Activated CD4-positive, alpha-beta T cell treated with anti-CD3 and anti-CD28 coated beads for 36 hours (primary cell): ENCODE measurements at regions of chr16 and their contacts with region 1.

Region 1: GRCh38 chr16:53054670-53055485 is at the start of gene CHD9:
- DNase-seq: peak; percentile 82
- ATAC-seq: peak; percentile 89
- H3K4me3 Mint-ChIP-seq: peak within 1 kb of the TSS; percentile 70
- H3K27ac Mint-ChIP-seq: peak within 1 kb of the TSS; percentile 83
- H3K4me1 Mint-ChIP-seq: peaks cover 21% of the 10 kb centered on the region
- H3K27me3 Mint-ChIP-seq: peaks cover 6% of the 10 kb centered on the region
- total RNA-seq, gene CHD9: 13.2 to 18.8 TPM

Region 2: GRCh38 chr16:52817696-52818095 is 237.2 kb before region 1 on chr16:
- CTCF ChIA-PET with region 1: no interaction called
- POLR2A ChIA-PET with region 1: no interaction called
- intact Hi-C with region 1: no loop called
- DNase-seq: no peak
- ATAC-seq: no peak
- H3K4me3 Mint-ChIP-seq: no peak overlapping the region
- H3K27ac Mint-ChIP-seq: no peak overlapping the region
- H3K4me1 Mint-ChIP-seq: no peaks in the 10 kb centered on the region
- H3K27me3 Mint-ChIP-seq: no peaks in the 10 kb centered on the region

Region 3: DNA sequence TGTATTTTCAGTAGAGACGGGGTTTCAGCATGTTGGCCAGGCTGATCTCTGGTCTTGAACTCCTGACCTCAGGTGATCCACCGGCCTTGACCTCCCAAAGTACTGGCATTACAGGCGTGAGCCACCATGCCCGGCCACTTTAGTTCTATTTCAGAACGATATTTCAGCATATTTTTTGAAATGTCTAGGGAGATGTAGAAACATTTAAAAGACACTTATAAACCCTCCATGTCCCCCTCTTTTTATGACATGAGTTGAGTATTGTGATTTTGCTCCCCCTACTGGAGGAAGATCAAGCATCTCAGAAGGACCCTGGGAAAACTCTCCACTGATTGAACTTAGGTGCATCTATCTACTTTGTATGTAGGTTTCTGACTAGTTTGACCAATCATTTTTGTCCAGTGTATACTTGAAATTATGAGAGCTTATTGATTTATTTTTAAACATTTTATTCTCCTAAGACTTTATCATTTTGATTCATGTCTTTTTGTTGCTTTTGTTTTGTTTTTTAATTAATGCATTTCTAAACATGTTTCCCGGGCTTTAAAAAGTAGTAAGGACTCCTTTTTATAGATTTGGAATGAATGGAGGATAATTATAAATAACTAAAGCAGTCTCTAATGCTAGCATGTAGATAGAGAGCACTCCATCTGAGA is 105.0 kb after region 1 on chr16:
- CTCF ChIA-PET with region 1: interaction called, 7 read pairs
- POLR2A ChIA-PET with region 1: no interaction called
- intact Hi-C with region 1: loop called (anchors 1 kb)
- DNase-seq: no peak
- ATAC-seq: peak; percentile 64
- H3K4me3 Mint-ChIP-seq: no peak overlapping the region
- H3K27ac Mint-ChIP-seq: no peak overlapping the region
- H3K4me1 Mint-ChIP-seq: peaks cover under 1% of the 10 kb centered on the region
- H3K27me3 Mint-ChIP-seq: no peaks in the 10 kb centered on the region

Region 4: GRCh38 chr16:53220585-53220984 is 165.7 kb after region 1 on chr16:
- CTCF ChIA-PET with region 1: interaction called, 4 read pairs
- POLR2A ChIA-PET with region 1: no interaction called
- intact Hi-C with region 1: loop called in 1 of 2 experiments (anchors 2 kb)
- DNase-seq: no peak
- ATAC-seq: no peak
- H3K4me3 Mint-ChIP-seq: no peak overlapping the region
- H3K27ac Mint-ChIP-seq: no peak overlapping the region
- H3K4me1 Mint-ChIP-seq: peaks cover 3% of the 10 kb centered on the region
- H3K27me3 Mint-ChIP-seq: no peaks in the 10 kb centered on the region

Region 5: DNA sequence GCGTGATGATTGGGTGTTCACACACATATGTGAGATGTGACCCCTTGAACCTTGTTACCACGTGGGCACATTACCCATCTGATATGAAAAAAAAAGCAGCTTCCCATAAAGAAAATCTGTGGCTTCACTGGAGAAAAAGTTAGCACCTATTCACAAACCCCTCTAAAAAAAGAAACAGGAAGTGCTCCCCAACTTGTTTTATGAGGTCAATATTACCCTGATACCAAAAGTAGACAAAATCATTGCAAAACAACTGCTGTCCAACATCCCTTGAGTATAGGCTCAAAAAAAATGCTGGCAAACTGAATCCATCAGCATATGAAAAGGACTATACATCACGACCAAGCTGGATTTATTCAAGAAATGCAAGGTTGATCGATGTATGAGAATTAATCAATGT is 279.7 kb after region 1 on chr16:
- CTCF ChIA-PET with region 1: no interaction called
- POLR2A ChIA-PET with region 1: no interaction called
- intact Hi-C with region 1: no loop called
- DNase-seq: no peak
- ATAC-seq: no peak
- H3K4me3 Mint-ChIP-seq: no peak overlapping the region
- H3K27ac Mint-ChIP-seq: no peak overlapping the region
- H3K4me1 Mint-ChIP-seq: peaks cover 2% of the 10 kb centered on the region
- H3K27me3 Mint-ChIP-seq: no peaks in the 10 kb centered on the region

Region 6: GRCh38 chr16:53372992-53373871 is 318.4 kb after region 1 on chr16:
- CTCF ChIA-PET with region 1: interaction called, 3 read pairs
- POLR2A ChIA-PET with region 1: no interaction called
- intact Hi-C with region 1: loop called in 1 of 2 experiments (anchors 5 kb)
- DNase-seq: peak; percentile 88
- ATAC-seq: peak; percentile 97
- H3K4me3 Mint-ChIP-seq: no peak overlapping the region
- H3K27ac Mint-ChIP-seq: peak overlapping the region; percentile 61
- H3K4me1 Mint-ChIP-seq: peaks cover 24% of the 10 kb centered on the region
- H3K27me3 Mint-ChIP-seq: no peaks in the 10 kb centered on the region

Region 7: DNA sequence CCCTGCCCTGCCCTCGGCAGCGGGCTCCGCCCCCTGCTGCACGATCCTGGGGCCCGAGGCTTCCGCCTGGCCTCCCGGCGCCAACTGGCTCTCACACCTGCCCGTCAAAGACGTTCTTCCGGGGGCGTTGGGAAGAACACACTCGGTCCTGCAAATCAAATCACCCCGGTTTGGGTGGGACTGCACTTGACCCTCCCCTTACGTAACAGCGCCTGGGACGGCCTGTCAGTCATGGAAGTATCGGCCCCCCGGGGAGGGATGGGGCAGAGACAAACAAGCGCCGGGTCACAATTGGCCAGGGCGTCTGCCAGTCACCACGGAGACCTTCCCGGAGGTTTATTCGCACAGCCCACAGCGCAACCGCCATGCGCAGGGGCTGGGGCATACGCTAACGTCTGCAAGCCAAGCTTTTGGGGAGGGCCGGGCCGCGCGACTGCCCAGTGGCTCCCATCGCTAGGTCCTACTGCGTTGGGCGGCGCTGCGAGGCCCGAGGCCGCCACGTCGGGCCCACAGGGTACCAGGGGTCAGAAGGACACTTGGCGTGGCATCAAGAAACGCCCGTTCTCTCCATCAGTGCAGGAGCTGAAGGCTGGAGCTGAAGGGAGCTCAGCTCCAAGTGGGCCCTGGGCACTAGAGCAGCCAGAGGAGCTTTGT is 448.5 kb after region 1 on chr16:
- CTCF ChIA-PET with region 1: no interaction called
- POLR2A ChIA-PET with region 1: no interaction called
- intact Hi-C with region 1: loop called in 1 of 2 experiments (anchors 5 kb)
- DNase-seq: peak; percentile 100
- ATAC-seq: peak; percentile 92
- H3K4me3 Mint-ChIP-seq: peak overlapping the region; percentile 94
- H3K27ac Mint-ChIP-seq: peak overlapping the region; percentile 96
- H3K4me1 Mint-ChIP-seq: peaks cover 60% of the 10 kb centered on the region
- H3K27me3 Mint-ChIP-seq: no peaks in the 10 kb centered on the region

Region 8: GRCh38 chr16:53703590-53704444 is 648.9 kb after region 1 on chr16 and contains the starts of genes FTO and RPGRIP1L:
- CTCF ChIA-PET with region 1: no interaction called
- POLR2A ChIA-PET with region 1: no interaction called
- intact Hi-C with region 1: loop called in 1 of 2 experiments (anchors 10 kb)
- DNase-seq: peak; percentile 99
- ATAC-seq: peak; percentile 98
- H3K4me3 Mint-ChIP-seq: peak within 1 kb of the TSS; percentile 96
- H3K27ac Mint-ChIP-seq: peak within 1 kb of the TSS; percentile 97
- H3K4me1 Mint-ChIP-seq: peaks cover 35% of the 10 kb centered on the region
- H3K27me3 Mint-ChIP-seq: no peaks in the 10 kb centered on the region
- total RNA-seq, gene FTO: 50.9 to 57.6 TPM
- total RNA-seq, gene RPGRIP1L: 7.8 to 10.2 TPM